IMR-90 (cell line): ENCODE measurements at regions of chr3 and their contacts with region 1.

Region 1: DNA sequence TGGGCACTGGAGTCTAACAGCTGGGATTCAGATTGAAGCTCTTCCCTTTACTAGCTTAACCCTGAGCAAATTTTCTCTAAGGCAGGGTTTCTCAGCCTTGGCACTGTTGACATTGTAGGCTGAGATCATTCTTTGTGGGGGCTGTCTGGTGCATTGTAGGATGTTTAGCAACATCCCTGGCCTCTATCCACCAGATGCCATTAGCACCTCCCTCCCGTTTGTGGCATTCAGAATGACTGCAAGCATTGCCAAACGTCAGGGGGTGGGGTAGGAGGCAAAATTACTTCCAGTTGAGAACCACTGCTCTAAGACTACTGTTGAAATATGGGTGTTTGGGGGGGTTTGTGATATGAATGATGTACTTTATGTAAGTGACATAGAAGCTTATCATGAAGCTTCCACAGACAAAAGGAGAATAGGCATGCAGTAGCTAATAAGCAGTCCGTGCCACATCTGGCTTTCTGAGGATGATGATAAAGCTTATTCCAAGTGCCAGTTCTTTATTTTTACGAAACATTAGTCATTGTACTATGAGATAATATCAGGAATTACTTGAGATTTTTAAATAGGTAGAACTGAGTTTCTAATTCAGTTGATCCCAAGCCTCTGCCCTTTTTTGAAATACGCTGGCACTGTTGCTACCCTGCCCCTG is 39.3 kb downstream of the NKIRAS1 start:
- DNase-seq: peak; percentile 81
- ATAC-seq: peak; percentile 61
- H3K4me3 ChIP-seq: no peak overlapping the region
- H3K27ac ChIP-seq: no peak overlapping the region
- H3K4me1 ChIP-seq: peaks cover 16% of the 10 kb centered on the region
- H3K27me3 ChIP-seq: no peaks in the 10 kb centered on the region
- CTCF ChIP-seq: no peak
- POLR2A ChIP-seq: no peak
- RAD21 ChIP-seq: no peak

Region 2: GRCh38 chr3:23202921-23203707 is 674.3 kb before region 1 on chr3 and contains the start of gene UBE2E2:
- CTCF ChIA-PET with region 1: no interaction called
- POLR2A ChIA-PET with region 1: no interaction called
- dilution Hi-C with region 1: no loop called
- in situ Hi-C with region 1: no loop called
- intact Hi-C with region 1: loop called (anchors 10 kb)
- DNase-seq: peak; percentile 66
- ATAC-seq: peak; percentile 81
- H3K4me3 ChIP-seq: peak within 1 kb of the TSS; percentile 91
- H3K27ac ChIP-seq: peak within 1 kb of the TSS; percentile 67
- H3K4me1 ChIP-seq: no peaks in the 10 kb centered on the region; the same call in 1 of the 2 replicates
- H3K27me3 ChIP-seq: peaks cover 11% of the 10 kb centered on the region
- CTCF ChIP-seq: no peak
- POLR2A ChIP-seq: peak; percentile 59; the same call in 1 of the 2 replicates
- RAD21 ChIP-seq: no peak
- total RNA-seq, gene UBE2E2: 18.6 and 18.9 TPM in 2 replicates

Region 3: GRCh38 chr3:23712656-23713559 is 164.5 kb before region 1 on chr3:
- CTCF ChIA-PET with region 1: no interaction called
- POLR2A ChIA-PET with region 1: no interaction called
- dilution Hi-C with region 1: no loop called
- in situ Hi-C with region 1: no loop called
- intact Hi-C with region 1: loop called (anchors 10 kb)
- DNase-seq: peak; percentile 96
- ATAC-seq: peak; percentile 84
- H3K4me3 ChIP-seq: no peak overlapping the region
- H3K27ac ChIP-seq: no peak overlapping the region
- H3K4me1 ChIP-seq: peaks cover 10% of the 10 kb centered on the region
- H3K27me3 ChIP-seq: no peaks in the 10 kb centered on the region
- CTCF ChIP-seq: 0 out of 2 replicates have a peak, but pooled peaks have one; percentile 14
- POLR2A ChIP-seq: no peak
- RAD21 ChIP-seq: no peak; the same call in 1 of the 2 replicates

Region 4: DNA sequence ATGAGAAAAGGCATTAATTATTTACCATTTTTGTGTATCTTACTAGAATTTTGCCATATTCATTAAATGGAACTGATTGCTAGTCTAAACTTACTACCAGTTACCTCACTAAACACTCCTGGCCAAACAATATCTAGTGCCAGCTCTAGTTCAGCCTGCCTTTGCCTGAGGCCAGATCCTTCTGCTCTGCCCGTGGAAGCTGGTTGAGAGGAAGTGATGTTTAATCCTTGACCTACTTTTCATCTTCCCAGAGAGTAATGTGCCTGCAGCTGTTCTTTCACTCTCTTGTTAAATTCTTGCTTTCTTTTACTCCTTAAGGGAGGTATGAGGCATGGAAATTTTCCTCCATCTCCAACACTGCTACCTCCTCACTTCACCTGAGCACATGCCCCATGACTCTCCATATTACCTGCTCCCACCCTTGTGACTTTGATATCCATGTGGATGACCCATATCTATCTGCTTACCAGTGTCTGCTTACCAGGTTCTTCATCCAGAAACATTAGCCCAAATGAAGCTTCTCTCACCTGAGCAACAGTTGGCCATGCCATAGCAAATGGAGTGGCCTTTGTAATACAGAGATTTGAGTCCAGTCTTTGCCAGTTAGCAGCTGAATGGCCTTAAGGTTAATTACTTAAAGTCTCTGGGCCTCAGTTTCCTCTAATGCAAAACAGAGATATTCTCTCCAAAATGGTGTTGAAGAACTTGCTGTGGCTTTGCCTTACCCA is 18.3 kb before region 1 on chr3:
- CTCF ChIA-PET with region 1: no interaction called
- POLR2A ChIA-PET with region 1: no interaction called
- dilution Hi-C with region 1: no loop called
- in situ Hi-C with region 1: no loop called
- intact Hi-C with region 1: no loop called
- DNase-seq: peak; percentile 39
- ATAC-seq: peak; percentile 47
- H3K4me3 ChIP-seq: no peak overlapping the region
- H3K27ac ChIP-seq: no peak overlapping the region
- H3K4me1 ChIP-seq: peaks cover 16% of the 10 kb centered on the region
- H3K27me3 ChIP-seq: no peaks in the 10 kb centered on the region
- CTCF ChIP-seq: no peak
- POLR2A ChIP-seq: no peak
- RAD21 ChIP-seq: no peak